Astrocyte of the cerebellum (primary cell): ENCODE measurements at regions of chr11 and their contacts with region 1.

Region 1: DNA sequence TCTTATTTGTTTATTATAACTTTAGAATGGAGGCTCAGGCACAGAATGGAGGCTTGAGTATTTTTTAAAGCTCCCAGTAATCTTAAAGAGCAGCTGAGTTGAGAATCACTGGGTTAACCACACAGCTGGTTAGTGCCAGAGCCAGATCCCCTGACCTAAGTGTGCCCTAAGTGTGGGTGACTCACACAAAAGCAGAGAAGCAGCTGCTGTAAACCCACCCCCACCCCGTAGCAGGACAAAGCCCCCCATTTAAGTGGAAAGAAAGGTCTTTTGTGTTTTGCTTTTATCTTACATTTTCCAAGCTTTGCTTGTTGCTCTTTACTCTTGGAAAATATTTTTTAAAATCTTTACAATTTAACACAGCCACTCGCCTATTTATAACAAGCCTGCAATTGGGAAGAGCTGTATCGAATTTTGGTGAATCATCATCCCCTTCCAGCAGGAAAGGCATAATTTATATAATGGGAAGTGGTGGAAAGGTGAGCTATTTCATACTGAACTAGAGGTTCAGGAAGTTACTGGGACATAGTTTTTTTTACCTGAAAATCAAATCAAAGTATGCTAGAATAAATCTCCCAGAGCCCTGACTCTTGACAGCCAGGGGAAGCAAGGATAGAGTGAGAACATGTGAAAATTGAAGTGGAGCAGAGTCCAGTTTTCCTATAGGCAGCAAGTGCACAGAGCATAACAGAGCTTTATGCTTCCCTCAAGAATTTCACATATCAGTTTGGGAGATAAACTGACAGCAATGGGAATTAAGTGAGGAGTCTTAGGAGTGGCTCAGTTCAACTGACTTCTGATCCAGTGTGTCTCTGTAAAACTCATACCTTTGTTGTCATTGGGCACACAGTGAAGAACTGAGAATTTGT is 405.7 kb downstream of the AASDHPPT start:
- DNase-seq: peak; percentile 73
- H3K4me3 ChIP-seq: no peak overlapping the region
- CTCF ChIP-seq: no peak

Region 2: GRCh38 chr11:106379718-106380117 is 103.4 kb before region 1 on chr11:
- in situ Hi-C with region 1: no loop called
- DNase-seq: no peak
- H3K4me3 ChIP-seq: no peak overlapping the region
- CTCF ChIP-seq: no peak

Region 3: GRCh38 chr11:106399076-106399511 is 84.1 kb before region 1 on chr11:
- in situ Hi-C with region 1: loop called (anchors 5 kb)
- DNase-seq: peak; percentile 99
- H3K4me3 ChIP-seq: no peak overlapping the region
- CTCF ChIP-seq: no peak

Region 4: DNA sequence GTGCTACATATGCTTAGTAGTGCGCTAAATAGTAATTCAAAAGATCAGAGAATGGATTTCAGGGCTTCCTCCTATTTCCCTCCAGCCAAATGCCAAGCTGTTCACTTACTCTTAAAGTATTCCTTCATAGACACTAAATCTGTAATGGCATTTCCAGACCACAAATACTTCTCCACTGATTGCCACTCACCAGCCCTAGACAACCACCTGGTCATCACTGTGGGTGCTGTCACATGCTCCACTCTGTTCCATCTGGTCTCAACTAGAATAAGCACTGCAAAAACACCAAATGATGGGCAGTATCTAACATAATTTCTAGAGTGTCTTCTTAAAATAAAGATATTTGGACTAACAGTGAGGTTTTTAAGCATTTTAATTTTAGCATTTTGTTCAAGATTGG is 64.4 kb before region 1 on chr11:
- in situ Hi-C with region 1: no loop called
- DNase-seq: no peak
- H3K4me3 ChIP-seq: no peak overlapping the region
- CTCF ChIP-seq: no peak

Region 5: GRCh38 chr11:106585061-106585460 is 101.9 kb after region 1 on chr11:
- in situ Hi-C with region 1: no loop called
- DNase-seq: no peak
- H3K4me3 ChIP-seq: no peak overlapping the region
- CTCF ChIP-seq: peak; percentile 43